ENCODE measurements at regions of chr10 and their contacts with region 1.

Region 1: GRCh38 chr10:112446855-112447711 is at the starts of genes VTI1A and ZDHHC6:
- DNase-seq: peak; percentile 80
- H3K4me3 Mint-ChIP-seq: peak within 1 kb of the TSS; percentile 93
- H3K27ac Mint-ChIP-seq: peak within 1 kb of the TSS; percentile 93
- H3K4me1 Mint-ChIP-seq: peaks cover 47% of the 10 kb centered on the region
- H3K27me3 Mint-ChIP-seq: no peaks in the 10 kb centered on the region
- total RNA-seq, gene VTI1A: 39.4 and 39.9 TPM in 2 replicates
- total RNA-seq, gene ZDHHC6: 51.9 and 52.6 TPM in 2 replicates

Region 2: DNA sequence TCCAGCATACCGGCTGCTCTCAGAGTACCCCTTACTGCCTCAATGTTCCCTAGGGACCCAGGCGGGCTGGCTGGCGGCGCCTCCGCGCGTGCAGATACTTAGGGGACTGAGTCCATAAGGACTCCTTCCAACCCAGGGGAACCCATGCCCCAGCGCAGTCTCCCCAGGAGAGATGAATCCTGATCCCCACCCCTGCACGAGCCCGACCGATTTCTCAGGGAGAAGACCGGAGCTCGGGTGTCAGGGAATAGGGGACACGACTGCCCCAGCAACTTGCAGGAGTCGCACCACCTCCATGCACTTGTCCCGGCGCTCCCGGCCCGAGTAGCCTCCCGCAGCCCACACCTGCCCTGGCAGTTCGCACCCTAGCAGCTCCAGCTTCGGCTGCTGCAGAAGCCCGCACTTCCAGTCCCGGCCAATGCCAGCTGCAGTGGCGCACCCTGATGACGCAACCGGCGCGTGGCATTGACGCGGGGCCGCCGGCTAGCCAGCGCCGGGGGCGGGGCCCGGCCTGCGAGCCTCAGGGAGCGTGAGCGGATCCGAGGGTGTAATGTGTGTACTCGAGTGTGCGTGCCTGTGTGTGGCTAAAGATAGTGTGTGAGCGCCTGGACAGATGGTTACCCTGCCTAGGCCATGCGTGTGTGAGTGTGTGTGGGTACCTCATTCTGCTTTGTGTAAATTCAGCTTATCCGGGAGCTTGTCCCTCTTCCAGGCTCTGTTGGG is 263.6 kb before region 1 on chr10 and contains the start of gene GPAM:
- intact Hi-C with region 1: loop called (anchors 1 kb)
- DNase-seq: peak; percentile 98
- H3K4me3 Mint-ChIP-seq: peak within 1 kb of the TSS; percentile 86
- H3K27ac Mint-ChIP-seq: peak within 1 kb of the TSS; percentile 93
- H3K4me1 Mint-ChIP-seq: peaks cover 34% of the 10 kb centered on the region
- H3K27me3 Mint-ChIP-seq: peaks cover 4% of the 10 kb centered on the region
- total RNA-seq, gene GPAM: 10.2 and 10.5 TPM in 2 replicates

Measured in activated T-helper 1 cell treated with anti-CD3 and anti-CD28 coated beads, Interleukin-12 subunit alpha, Interleukin-12 subunit beta, Interleukin-2, Interleukin-4 antibody, amounts not matched to agents 30 ng/mL and 10 ng/mL and 1 ng/mL, durations not matched to agents 14 hours and 24 hours and 36 hours (primary cell).